ENCODE measurements at regions of chr19 and their contacts with region 1.

Region 1: DNA sequence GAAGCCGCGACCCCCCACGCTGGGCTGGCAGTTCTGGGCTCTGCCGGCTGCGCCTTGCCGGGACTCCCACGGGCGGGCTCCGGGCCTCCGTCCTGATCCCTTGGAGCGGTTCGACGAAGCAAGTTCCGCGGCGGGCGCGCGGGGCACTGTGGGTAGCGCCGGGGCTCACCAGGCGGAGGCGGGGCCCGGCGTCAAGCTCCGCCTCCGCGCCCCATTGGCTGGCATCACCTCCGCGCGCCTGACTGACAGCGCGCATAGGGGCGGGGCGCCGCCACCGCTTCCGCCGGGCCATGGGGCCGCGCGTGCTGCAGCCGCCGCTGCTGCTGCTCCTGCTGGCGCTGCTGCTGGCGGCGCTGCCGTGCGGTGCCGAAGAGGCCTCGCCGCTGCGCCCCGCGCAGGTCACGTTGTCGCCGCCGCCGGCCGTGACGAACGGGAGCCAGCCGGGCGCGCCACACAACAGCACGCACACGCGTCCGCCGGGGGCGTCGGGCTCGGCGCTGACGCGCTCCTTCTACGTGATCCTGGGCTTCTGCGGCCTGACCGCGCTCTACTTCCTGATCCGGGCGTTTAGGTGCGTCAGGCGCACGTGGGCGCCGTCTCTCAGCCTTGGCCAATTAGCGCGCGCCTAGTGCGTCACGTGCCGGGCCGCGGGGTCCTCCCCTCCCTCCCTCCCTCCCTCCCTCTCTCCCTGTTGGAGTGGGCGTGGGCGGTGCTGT is at the start of gene FAM174C:
- DNase-seq: peak; percentile 97
- ATAC-seq: peak; percentile 76 to 81 (median 77)
- H3K4me3 ChIP-seq: peak within 1 kb of the TSS; percentile 87
- H3K27ac ChIP-seq: peak within 1 kb of the TSS; percentile 99
- H3K4me1 ChIP-seq: peaks cover 56% of the 10 kb centered on the region
- H3K27me3 ChIP-seq: no peaks in the 10 kb centered on the region
- CTCF ChIP-seq: peak; percentile 8
- total RNA-seq, gene FAM174C: 9.0 to 18.1 (median 14.0) TPM

Region 2: GRCh38 chr19:1383311-1384084 is 108.1 kb after region 1 on chr19 and contains the start of gene NDUFS7:
- intact Hi-C with region 1: loop called in 1 of 2 experiments (anchors 5 kb)
- DNase-seq: peak; percentile 90 to 95
- ATAC-seq: peak; percentile 88 to 92 (median 90)
- H3K4me3 ChIP-seq: peak within 1 kb of the TSS; percentile 88
- H3K27ac ChIP-seq: peak within 1 kb of the TSS; percentile 93
- H3K4me1 ChIP-seq: peaks cover 41% of the 10 kb centered on the region
- H3K27me3 ChIP-seq: no peaks in the 10 kb centered on the region
- CTCF ChIP-seq: no peak
- total RNA-seq, gene NDUFS7: 230 to 338 (median 308) TPM

Region 3: GRCh38 chr19:1406774-1407499 is 131.5 kb after region 1 on chr19:
- intact Hi-C with region 1: loop called in 1 of 2 experiments (anchors 10 kb)
- DNase-seq: peak; percentile 100
- ATAC-seq: peak; percentile 84 to 92 (median 88)
- H3K4me3 ChIP-seq: peak overlapping the region; percentile 97
- H3K27ac ChIP-seq: peak overlapping the region; percentile 82
- H3K4me1 ChIP-seq: peaks cover 36% of the 10 kb centered on the region
- H3K27me3 ChIP-seq: no peaks in the 10 kb centered on the region
- CTCF ChIP-seq: peak; percentile 29

Region 4: DNA sequence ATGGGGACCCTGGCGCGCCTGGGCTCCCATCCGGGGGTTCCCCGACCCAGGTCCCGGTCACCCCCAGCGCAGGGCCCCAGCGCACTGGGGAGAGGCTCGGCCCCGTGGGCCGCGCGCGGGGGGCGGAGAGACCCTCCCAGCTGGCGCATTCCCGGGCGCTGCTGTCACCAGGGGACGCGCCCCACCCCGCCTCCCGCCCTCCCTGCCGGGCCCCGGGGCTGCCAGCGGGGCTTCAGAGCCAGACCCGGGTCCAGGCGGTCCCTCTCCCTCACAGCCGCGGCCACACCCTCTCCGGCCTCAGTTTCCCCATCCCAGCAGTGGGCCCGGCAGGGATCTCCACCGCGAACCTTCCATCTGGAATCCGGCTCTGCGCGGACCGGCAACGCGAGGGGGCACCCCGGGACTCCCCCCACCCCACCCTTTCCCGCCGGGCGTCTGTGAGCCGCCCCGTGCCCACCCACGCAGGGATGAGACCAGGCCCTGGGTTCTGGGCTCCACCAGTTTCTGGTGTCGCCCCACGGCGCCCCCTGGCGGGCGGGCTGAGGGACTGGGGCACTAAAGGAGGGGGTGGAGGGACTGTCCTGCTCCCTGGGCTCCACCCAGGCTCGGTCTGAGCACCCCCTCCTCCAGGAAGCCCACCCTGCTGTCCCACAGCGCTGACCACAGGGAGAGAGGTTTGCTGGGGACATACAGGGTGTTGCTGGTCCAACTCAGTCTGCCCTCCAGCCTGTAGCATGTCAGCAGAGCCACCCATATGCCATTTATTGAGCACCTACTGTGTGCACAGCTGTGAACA is 238.3 kb after region 1 on chr19:
- intact Hi-C with region 1: loop called in 1 of 2 experiments (anchors 5 kb)
- DNase-seq: peak; percentile 63 to 84
- ATAC-seq: peak; percentile 77 to 87 (median 80)
- H3K4me3 ChIP-seq: peak overlapping the region; percentile 73
- H3K27ac ChIP-seq: peak overlapping the region; percentile 89
- H3K4me1 ChIP-seq: peaks cover 6% of the 10 kb centered on the region
- H3K27me3 ChIP-seq: peaks cover 0 to 5% (median 0%) of the 10 kb centered on the region in 3 donors
- CTCF ChIP-seq: peak; percentile 64

Measured in psoas muscle (tissue), 8 donors.